HepG2 (cell line): ENCODE measurements at regions of chr19 and their contacts with region 1.

Region 1: DNA sequence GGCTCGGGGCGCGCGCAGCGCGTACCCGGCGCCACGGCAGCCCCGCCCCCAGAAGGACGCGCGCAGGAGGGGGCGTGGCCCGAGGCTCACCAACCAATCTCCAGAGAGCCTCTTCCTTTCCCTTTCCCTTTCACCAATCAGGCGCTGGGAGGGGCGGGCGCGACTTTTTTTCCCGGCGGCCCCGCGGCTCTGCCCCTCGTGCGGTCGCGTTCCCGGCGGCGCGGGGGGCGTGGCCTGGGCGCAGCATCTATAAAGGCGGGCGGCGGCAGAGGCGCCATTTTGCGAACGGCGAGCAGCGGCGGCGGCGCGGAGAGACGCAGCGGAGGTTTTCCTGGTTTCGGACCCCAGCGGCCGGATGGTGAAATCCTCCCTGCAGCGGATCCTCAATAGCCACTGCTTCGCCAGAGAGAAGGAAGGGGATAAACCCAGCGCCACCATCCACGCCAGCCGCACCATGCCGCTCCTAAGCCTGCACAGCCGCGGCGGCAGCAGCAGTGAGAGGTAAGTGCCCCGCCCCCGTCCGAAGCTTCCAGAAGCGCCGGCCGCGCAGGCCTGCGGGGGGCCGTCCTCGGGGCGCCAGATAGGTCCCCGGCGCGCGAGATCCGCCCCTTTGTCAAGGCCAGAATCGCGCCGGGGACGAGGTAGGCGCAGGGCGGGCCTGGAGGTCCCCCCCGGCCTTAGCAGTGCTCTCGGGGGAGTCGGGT is 12.6 kb downstream of the PEAK3 start:
- DNase-seq: peak; percentile 91
- ATAC-seq: peak; percentile 37
- H3K4me3 ChIP-seq: peak overlapping the region; percentile 93 to 99 (median 96)
- H3K27ac ChIP-seq: peak overlapping the region; percentile 87
- H3K4me1 ChIP-seq: peaks cover 66% of the 10 kb centered on the region
- H3K27me3 ChIP-seq: no peaks in the 10 kb centered on the region; a peak in 1 of 5 replicates
- CTCF ChIP-seq: no peak
- EP300 ChIP-seq: no peak
- POLR2A ChIP-seq: peak; percentile 98
- RAD21 ChIP-seq: peak; percentile 68; the same call in 1 of the 2 replicates

Region 2: DNA sequence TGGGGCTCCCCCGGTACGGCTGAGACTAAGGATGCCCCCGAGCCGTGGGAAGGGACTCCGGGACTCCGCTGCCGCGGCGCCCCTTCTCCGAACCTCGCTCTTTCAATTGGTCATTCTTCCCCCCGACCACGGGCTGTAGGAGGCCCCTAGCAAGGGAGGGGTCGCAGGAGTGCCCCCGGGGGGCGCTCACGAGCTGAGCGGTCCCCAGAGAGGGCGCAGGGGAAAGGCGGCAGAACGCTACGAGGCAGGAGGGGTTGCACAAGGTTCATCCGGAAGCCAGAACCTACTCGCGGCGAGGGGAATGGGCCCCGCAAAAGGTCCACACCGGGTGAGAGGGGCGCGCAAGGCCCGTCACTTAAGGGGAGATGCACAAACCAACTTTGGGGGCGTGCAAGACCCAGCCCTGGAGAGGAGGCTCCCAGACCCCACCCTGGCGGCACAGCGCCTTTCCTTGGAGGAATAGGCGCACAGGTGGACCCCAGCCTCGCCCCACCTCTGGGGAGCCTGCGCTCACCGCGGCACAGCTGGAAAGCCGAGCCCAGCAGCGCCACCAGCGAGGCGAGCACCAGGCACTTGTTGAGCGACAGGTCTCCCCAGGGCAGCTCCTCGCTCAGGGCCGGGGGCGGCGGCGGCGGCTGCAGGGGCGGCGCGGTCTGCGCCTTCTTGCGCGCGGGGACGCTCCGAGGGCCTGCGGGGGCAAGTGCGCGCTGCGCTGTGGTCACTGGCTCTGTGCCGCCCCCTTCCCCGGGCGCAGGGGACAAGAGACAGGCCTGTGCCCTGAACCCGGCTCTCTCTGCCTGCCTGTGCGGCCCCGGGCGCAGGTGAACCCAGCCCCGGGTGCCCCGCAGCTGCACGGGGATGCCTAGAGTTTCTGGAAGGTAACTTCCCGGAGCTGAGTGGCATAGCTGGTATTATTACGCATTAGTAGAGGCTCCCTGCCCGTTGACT is 16.0 kb before region 1 on chr19:
- CTCF ChIA-PET with region 1: interaction called, 12 read pairs
- POLR2A ChIA-PET with region 1: interaction called, 8 read pairs
- in situ Hi-C with region 1: no loop called
- intact Hi-C with region 1: no loop called
- DNase-seq: peak; percentile 45
- ATAC-seq: peak; percentile 65
- H3K4me3 ChIP-seq: peak overlapping the region; percentile 41 to 67 (median 49)
- H3K27ac ChIP-seq: no peak overlapping the region
- H3K4me1 ChIP-seq: peaks cover 35% of the 10 kb centered on the region
- H3K27me3 ChIP-seq: peaks cover under 1 to 2% of the 10 kb centered on the region in 2 experiments; a peak in 2 of 5 replicates
- CTCF ChIP-seq: peak; percentile 83
- EP300 ChIP-seq: no peak
- POLR2A ChIP-seq: no peak
- RAD21 ChIP-seq: peak; percentile 57